ENCODE measurements at regions of chr7 and their contacts with region 1.

Region 1: DNA sequence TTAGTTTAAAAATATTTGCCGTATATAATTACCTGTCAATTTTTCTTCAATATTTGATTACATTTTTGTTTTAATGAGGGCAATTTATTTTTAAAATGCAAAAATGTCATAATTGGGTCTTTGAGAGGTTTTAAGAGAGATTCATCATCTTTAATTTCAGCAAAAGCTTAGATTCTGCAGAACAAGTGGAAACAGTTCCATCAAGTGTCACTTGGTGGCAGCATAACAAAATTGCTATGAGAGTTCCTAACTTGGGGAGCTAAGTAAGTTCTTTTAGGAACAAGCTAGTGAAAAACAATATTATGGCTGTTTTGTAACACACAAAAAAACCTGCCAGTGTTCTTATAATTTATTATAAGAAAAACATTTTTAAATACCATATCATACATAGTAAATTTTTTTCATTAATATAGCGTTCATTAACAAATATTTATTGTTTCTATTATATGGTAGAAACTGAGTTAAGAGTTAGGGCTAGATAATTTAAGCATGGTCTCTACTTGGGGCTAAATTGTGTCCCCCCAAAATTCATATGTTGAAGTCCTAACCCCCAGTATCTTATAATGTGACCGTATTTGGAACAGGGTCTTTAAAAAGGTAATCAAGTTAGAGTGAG is 155.2 kb downstream of the MAGI2 start:
- DNase-seq: no peak
- H3K4me3 ChIP-seq: no peak overlapping the region
- H3K27ac ChIP-seq: no peak overlapping the region
- H3K4me1 ChIP-seq: no peaks in the 10 kb centered on the region
- H3K27me3 ChIP-seq: no peaks in the 10 kb centered on the region
- CTCF ChIP-seq: peak; percentile 21 to 76 (median 75)

Region 2: DNA sequence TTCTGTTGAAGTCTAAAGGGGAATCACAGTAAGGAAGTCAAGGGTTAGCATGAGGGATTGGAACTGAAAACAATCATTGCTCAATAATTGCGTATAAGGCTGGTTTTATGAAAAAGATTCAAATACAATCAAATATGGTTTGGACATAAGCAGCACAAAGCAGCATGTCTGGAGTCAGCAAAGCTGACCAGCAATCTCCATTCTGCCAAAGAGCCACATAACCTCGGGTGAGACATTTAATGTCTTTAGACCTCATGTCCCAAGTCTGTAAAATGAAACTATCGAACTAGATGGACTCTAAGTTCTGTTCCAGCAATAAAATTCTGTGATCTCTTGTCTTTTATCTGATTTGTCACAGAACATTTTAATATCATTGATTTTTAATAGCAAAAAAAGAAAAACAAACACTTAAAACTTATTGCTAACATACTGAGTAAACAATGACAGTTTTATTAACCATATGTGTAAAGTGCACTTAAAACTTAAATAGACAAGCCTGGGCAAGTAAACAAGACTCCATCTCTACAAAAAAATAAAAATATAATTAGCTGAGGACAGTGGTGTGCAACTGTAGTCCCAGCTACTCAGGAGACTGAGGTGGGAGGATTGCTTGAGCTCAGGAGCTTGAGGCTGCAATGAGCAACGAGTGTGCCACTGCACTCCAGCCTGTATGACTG is 61.8 kb before region 1 on chr7:
- intact Hi-C with region 1: no loop called
- DNase-seq: no peak
- H3K4me3 ChIP-seq: no peak overlapping the region
- H3K27ac ChIP-seq: no peak overlapping the region
- H3K4me1 ChIP-seq: no peaks in the 10 kb centered on the region
- H3K27me3 ChIP-seq: no peaks in the 10 kb centered on the region
- CTCF ChIP-seq: no peak

Region 3: DNA sequence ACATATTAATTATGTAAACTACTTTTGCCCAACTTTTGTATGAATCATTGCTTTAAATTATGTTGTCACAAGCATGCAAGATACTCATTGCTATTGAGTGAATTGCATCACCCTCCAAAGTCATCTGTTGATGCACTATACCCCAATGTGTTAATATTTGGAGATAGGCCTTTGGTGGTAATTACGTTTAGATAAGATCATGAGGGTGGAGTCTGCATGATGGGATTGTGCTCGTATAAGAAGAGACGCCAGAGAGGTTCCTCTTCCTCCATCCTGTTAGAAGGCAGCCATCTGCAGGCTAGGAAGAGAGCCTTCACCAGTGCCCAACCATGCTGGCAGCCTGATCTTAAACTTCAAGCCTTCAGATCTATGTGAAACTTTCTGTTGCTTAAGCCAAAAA is 250.5 kb after region 1 on chr7:
- intact Hi-C with region 1: loop called (anchors 5 kb)
- DNase-seq: no peak
- H3K4me3 ChIP-seq: no peak overlapping the region
- H3K27ac ChIP-seq: no peak overlapping the region
- H3K4me1 ChIP-seq: no peaks in the 10 kb centered on the region
- H3K27me3 ChIP-seq: no peaks in the 10 kb centered on the region
- CTCF ChIP-seq: no peak